ENCODE measurements at regions of chr5 and their contacts with region 1.

Region 1: DNA sequence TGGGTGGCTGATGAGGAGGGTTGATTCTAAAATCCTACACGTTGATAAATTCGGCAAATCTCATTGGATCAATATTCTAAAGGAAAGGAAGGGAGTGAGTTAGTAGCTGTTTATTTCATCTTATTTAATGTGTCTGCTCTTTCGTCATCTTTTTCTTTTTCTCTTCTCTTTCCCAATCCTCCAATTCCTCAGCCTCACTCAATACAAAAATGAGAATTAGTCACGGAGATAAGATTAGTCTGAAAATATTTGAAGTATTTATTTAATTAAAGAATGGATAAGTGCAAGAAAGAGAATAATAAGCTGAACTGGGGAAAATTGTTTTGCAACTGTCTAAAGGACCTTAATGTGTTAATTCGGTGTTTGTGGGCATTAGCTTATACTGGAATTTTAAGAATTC is 1095.1 kb downstream of the DTWD2 start:
- DNase-seq: no peak
- ATAC-seq: no peak
- H3K4me3 ChIP-seq: no peak overlapping the region
- H3K27ac ChIP-seq: no peak overlapping the region
- H3K4me1 ChIP-seq: peaks cover 8% of the 10 kb centered on the region
- H3K27me3 ChIP-seq: no peaks in the 10 kb centered on the region
- CTCF ChIP-seq: no peak

Region 2: GRCh38 chr5:117494188-117494587 is 399.0 kb before region 1 on chr5:
- intact Hi-C with region 1: no loop called
- DNase-seq: no peak
- ATAC-seq: no peak
- H3K4me3 ChIP-seq: no peak overlapping the region
- H3K27ac ChIP-seq: no peak overlapping the region
- H3K4me1 ChIP-seq: no peaks in the 10 kb centered on the region
- H3K27me3 ChIP-seq: no peaks in the 10 kb centered on the region
- CTCF ChIP-seq: no peak

Region 3: DNA sequence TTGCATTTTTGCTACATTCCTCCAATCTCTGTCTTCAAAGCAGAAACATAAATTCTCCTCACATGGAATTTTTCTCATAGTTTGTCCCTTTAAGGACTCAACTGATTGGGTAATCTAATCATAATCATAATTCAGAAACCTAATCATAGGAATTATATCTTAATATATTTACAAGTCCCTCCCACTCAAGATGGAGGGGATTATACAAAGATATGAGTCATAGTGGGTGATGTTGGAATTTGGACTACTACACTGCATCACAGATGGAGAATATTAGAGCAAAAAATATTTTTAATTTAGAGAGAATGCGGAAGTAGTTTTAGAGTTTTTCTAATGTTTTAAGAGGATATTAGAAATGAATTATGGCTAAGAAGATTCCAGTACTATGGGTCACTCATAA is 61.1 kb after region 1 on chr5:
- intact Hi-C with region 1: no loop called
- DNase-seq: no peak
- ATAC-seq: no peak
- H3K4me3 ChIP-seq: no peak overlapping the region
- H3K27ac ChIP-seq: no peak overlapping the region
- H3K4me1 ChIP-seq: no peaks in the 10 kb centered on the region
- H3K27me3 ChIP-seq: no peaks in the 10 kb centered on the region
- CTCF ChIP-seq: no peak

Region 4: DNA sequence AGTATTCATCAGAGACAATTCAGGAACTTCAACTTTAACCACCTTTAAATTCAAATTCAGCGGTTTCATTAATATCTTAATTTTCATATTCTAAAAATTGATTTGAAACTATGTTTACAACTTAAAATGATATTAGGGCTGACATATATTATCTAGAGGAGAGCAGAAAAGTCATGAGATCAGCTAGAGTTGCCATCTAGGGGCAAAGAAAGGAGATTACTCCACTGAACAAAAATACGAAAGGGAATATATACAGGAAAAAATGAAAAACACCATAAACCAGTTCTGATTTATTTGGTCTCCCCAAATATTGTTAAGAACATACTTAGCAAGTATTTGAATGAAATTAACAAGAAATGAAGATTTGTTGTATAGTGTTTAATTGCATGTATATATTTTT is 148.9 kb after region 1 on chr5:
- intact Hi-C with region 1: loop called (anchors 5 kb)
- DNase-seq: no peak
- ATAC-seq: no peak
- H3K4me3 ChIP-seq: no peak overlapping the region
- H3K27ac ChIP-seq: no peak overlapping the region
- H3K4me1 ChIP-seq: no peaks in the 10 kb centered on the region
- H3K27me3 ChIP-seq: no peaks in the 10 kb centered on the region
- CTCF ChIP-seq: no peak

Region 5: DNA sequence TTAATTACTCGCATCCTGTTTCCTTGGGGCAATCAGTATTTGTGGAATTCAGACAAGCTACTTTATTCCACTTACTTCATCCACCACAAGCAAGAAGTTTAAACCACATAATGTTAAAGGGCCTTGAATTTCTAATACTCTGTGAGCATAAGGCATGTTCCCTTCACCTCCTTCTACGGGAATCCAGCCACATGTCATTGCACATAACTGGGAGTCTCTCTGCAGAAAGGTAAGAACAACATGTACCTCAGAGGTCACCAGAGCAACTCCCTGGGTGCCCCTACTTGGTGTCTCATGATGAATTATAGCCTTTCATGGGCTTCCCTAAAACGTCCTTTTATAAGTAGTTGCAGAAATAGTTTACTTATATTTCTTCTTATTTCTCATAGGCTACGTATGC is 541.9 kb after region 1 on chr5:
- intact Hi-C with region 1: no loop called
- DNase-seq: no peak
- ATAC-seq: no peak
- H3K4me3 ChIP-seq: no peak overlapping the region
- H3K27ac ChIP-seq: no peak overlapping the region
- H3K4me1 ChIP-seq: no peaks in the 10 kb centered on the region
- H3K27me3 ChIP-seq: no peaks in the 10 kb centered on the region
- CTCF ChIP-seq: no peak